Calu3 (cell line): ENCODE measurements at regions of chr10 and their contacts with region 1.

Region 1: GRCh38 chr10:86899670-86900276 is 57.6 kb downstream of the MMRN2 start:
- DNase-seq: peak; percentile 58
- H3K4me3 Mint-ChIP-seq: no peak overlapping the region
- H3K27ac Mint-ChIP-seq: no peak overlapping the region
- H3K4me1 Mint-ChIP-seq: no peaks in the 10 kb centered on the region
- H3K27me3 Mint-ChIP-seq: no peaks in the 10 kb centered on the region
- CTCF ChIP-seq: no peak

Region 2: DNA sequence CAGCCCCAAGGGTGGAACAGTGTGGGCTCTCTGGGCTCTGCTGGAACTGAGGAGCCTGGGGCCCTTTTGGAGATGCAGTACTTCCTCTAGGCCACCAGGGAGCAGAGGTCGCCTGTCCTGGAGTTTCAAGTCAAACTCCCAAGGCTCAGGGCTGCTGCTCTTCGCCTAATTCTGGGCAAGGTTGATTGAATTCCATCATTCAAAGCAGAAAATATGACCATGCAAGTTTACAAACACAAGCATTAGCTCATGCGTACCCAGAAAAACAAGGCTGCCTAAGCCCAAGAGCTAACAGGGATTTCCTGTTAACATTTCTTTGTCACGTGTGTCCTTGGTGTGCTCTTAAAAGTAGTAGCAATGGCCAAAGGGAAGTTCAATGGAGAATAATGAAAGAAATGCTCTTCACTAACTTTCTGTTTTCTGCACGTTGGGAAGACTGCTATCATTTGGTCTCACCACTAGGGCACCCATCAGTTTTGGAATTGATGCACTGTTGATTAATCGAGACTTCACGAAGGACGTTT is 211.3 kb before region 1 on chr10:
- CTCF ChIA-PET with region 1: interaction called, 4 read pairs
- intact Hi-C with region 1: loop called (anchors 1 kb)
- DNase-seq: peak; percentile 49
- H3K4me3 Mint-ChIP-seq: no peak overlapping the region
- H3K27ac Mint-ChIP-seq: no peak overlapping the region
- H3K4me1 Mint-ChIP-seq: no peaks in the 10 kb centered on the region
- H3K27me3 Mint-ChIP-seq: peaks cover 42% of the 10 kb centered on the region
- CTCF ChIP-seq: peak; percentile 67

Region 3: DNA sequence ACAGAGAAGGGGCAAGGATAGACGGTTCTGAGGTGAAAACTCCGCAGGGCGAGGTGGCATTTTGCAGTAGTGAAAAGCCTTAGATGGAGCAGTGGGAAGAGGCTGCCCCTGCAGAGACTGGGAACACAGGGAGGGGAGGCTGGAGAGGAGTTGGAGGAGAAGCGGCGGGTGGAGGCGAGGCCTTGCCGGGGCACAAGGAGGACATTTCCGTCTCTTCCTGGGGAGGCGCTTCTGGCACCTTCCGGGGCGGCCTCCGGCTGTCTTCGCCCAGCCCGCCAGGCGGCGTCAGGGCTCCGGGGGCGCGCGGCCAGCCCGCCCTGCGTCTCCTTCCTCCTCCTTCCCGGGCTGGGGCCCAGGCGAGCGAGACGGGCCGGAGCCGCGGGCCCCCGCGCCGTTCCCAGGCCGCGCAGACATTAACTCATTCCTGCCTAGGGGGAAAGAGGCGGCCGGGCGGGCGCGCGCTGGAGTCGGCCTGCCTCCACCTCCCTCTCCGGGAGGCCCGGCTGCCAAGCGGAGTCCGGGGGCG is 188.7 kb before region 1 on chr10:
- CTCF ChIA-PET with region 1: no interaction called
- intact Hi-C with region 1: loop called (anchors 5 kb)
- DNase-seq: peak; percentile 89
- H3K4me3 Mint-ChIP-seq: peak overlapping the region; percentile 69
- H3K27ac Mint-ChIP-seq: peak overlapping the region; percentile 34
- H3K4me1 Mint-ChIP-seq: no peaks in the 10 kb centered on the region
- H3K27me3 Mint-ChIP-seq: no peaks in the 10 kb centered on the region
- CTCF ChIP-seq: peak; percentile 76